Gastrocnemius medialis (tissue), 4 donors: ENCODE measurements at regions of chr17 and their contacts with region 1.

Region 1: DNA sequence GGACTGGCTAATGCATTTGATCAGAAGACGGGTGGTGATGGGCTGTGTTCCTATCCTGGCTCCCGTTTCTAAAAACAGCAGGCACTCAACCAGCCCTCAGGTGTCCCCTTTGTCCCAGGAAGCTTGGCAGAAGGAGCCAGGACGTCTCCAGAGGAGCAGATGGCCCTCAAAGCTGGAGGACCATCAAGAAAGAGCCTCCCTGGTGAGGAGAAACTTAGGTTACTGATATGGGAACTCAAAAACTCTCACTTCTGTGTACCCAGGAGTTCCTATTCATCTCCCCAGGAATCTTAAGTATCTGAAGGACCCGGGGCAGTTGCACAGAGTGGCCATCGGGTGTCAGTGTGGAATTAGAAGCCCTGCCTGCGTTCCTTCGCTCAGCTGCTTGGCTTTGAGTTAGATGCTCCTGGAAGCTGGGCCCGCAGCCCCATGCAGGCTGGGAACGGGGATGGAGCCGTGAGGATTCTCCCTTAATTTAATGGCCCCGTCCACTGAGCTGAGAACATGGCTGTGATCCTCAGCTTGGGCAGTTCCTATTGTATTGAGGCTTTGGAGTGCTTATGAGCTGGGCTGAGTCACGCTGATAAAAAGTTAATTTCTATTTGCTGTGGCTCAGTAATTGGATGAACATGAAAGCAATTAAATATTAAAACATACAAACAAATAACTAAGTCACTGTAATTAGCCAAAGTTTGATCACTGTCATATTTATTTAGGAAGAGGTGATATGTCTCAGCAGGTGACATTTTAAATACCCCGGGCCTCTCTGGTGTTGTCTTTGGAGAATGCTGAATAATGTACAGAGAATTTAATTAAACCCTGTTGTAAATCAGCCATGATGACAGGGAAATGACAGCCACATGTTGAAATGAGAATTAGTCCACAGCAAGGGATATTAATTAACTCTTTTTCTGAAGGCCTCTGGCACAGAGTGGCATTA is 402.1 kb downstream of the SEC14L1 start:
- DNase-seq: peak; percentile 69 to 77
- ATAC-seq: peak; percentile 92 to 96
- H3K4me3 ChIP-seq: no peak overlapping the region
- H3K27ac ChIP-seq: no peak overlapping the region
- H3K4me1 ChIP-seq: no peaks in the 10 kb centered on the region
- H3K27me3 ChIP-seq: peaks cover 0 to 4% (median 3%) of the 10 kb centered on the region in 3 donors
- CTCF ChIP-seq: peak; percentile 79 to 94 (median 88)
- POLR2A ChIP-seq: no peak

Region 2: DNA sequence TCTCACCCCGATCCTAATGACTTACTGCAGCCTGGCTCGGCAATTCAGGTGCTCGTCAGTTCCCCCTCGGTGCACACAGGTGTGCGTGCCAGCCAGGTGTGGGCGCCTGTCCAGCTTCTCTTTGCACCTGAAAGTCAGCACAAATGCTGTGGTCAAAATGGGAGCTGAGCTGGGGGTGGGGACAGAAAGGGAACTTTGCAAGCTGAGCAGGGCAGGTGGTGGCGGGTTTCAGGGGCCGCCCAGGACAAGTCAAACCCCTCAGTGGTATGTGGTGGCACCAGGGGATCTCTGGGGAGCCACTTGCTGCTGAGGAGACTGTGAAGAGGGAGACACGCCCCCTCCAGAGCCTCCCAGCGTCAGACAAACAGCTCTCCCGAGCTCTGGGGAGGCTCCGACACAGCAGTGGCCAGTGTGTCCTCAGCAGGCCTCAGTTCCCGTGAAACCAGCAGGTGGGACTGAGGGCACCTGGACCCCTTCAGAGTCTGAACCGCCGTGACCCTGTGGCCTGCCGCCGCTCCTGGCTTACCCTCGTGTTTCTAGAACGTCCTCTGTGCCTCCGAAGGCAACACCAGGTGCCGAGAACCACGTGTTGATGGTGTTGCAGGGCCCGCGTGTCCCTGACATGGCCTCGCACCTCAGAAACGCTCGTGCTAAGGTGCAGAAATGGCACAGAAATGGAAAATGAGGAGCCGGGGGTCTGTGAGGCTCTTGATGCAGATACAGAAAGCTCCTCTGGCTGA is 182.2 kb after region 1 on chr17:
- in situ Hi-C with region 1: loop called in 1 of 4 experiments (anchors 10 kb)
- intact Hi-C with region 1: no loop called
- DNase-seq: no peak
- ATAC-seq: no peak
- H3K4me3 ChIP-seq: no peak overlapping the region
- H3K27ac ChIP-seq: no peak overlapping the region
- H3K4me1 ChIP-seq: peaks cover 4 to 6% of the 10 kb centered on the region in 2 donors
- H3K27me3 ChIP-seq: no peaks in the 10 kb centered on the region
- CTCF ChIP-seq: no peak
- POLR2A ChIP-seq: no peak

Region 3: DNA sequence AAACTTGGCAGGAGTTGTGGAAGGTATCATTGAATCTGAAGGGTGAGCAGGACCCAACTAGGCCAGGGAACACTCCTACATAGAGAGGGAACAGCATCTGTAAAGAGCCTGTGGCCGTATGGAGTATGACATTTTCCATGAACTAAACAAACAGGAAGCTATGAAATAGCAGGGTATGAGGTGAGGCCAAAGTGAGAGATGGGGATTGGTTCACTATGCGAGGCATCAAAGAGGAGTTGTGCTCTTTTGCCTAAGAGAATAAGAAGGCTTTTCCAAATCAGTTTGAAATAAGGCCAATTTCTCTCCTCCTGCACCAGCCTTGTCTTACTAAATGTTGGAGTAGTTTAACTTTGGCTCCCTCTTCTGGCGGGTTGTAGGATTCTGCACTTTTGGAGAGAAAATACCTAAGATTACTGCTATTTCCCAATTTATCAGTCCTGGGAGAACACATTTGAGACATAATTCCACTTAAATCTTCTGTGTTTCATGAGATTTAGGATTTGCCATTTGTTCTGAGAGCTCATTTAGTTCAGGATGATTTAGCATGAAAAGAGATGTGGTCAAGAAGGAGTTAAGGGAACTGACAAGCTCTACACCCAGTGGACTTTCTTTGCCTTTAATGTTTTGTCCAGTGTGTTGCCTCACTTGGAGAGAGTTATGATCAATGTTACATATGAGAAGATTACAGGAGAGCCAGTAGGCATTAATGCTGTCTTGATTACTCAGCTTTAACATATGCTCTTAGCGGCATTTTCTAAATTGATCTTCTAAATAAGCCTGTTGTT is 471.1 kb after region 1 on chr17:
- in situ Hi-C with region 1: loop called (anchors 5 to 10 kb)
- intact Hi-C with region 1: loop called (anchors 1 kb)
- DNase-seq: peak in 1 of 2 donors; percentile 43
- ATAC-seq: peak; percentile 73 to 80
- H3K4me3 ChIP-seq: no peak overlapping the region
- H3K27ac ChIP-seq: peak overlapping the region in 1 of 4 donors; percentile 0
- H3K4me1 ChIP-seq: peaks cover 0 to 7% of the 10 kb centered on the region in 2 donors
- H3K27me3 ChIP-seq: no peaks in the 10 kb centered on the region
- CTCF ChIP-seq: peak; percentile 68 to 83 (median 76)
- POLR2A ChIP-seq: no peak

Region 4: GRCh38 chr17:78019367-78019975 is 476.6 kb after region 1 on chr17:
- in situ Hi-C with region 1: loop called (anchors 5 to 10 kb)
- intact Hi-C with region 1: loop called (anchors 1 kb)
- DNase-seq: no peak
- ATAC-seq: peak in 1 of 2 donors; percentile 38
- H3K4me3 ChIP-seq: no peak overlapping the region
- H3K27ac ChIP-seq: peak overlapping the region in 3 of 4 donors; percentile 32 to 56 (median 51)
- H3K4me1 ChIP-seq: peaks cover 17 to 20% of the 10 kb centered on the region in 2 donors
- H3K27me3 ChIP-seq: no peaks in the 10 kb centered on the region
- CTCF ChIP-seq: peak; percentile 58 to 74 (median 60)
- POLR2A ChIP-seq: no peak